HAP-1 (cell line): ENCODE measurements at regions of chrX and their contacts with region 1.

Region 1: DNA sequence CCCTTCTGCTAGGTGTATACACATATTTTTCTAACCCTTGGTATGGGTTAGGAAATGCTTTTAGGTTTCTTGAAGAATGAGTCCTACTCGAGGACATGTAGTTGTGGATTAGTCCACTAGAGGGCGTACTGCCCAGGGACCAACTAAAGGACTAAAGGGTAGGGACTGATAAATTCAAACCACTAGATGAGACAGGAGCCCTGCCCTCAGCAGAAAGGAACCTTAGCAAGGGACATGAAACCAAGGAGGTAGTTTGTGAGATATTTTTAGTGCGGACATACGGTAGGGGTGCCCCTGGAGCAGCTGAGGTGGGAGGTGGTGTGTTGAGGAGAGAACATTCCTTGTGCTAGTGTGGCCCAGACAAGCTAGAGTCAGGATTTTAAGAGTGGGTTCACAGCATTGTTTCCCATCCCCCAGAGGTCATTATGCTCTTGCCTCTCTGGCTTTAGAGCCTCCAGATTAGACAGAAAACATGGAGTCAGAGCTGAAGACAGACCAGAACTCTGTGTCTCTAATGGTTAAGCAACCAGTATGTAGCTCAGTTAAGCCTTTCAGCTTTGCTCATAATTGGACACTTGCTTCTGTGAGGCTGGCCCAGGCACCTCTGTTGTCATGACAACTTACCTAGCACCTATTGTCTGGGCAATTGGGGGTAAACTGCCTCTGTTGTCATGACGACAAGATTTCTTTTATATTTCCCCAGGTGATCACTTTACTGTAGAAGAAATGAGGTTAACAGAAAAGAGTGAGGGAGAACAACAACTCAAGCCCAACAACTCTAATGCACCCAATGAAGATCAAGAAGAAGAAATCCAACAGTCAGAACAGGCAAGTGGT is 1.0 kb downstream of the TMEM31 start:
- DNase-seq: peak; percentile 53 to 82
- H3K4me3 ChIP-seq: no peak overlapping the region
- H3K4me1 ChIP-seq: no peaks in the 10 kb centered on the region
- H3K27me3 ChIP-seq: peaks cover 2% of the 10 kb centered on the region; the same call in 1 of the 2 replicates

Region 2: GRCh38 chrX:103779141-103779789 is 67.5 kb after region 1 on chrX:
- in situ Hi-C with region 1: loop called (anchors 5 kb)
- DNase-seq: peak in 1 of 2 experiments; percentile 31
- H3K4me3 ChIP-seq: no peak overlapping the region
- H3K4me1 ChIP-seq: no peaks in the 10 kb centered on the region
- H3K27me3 ChIP-seq: peaks cover 21% of the 10 kb centered on the region; the same call in 1 of the 2 replicates